Endothelial cell of umbilical vein (primary cell): ENCODE measurements at regions of chrX and their contacts with region 1.

Region 1: GRCh38 chrX:12115377-12115776 is 22.9 kb upstream of the FRMPD4 start:
- DNase-seq: peak; percentile 1
- H3K4me3 ChIP-seq: no peak overlapping the region
- H3K27ac ChIP-seq: no peak overlapping the region
- H3K4me1 ChIP-seq: no peaks in the 10 kb centered on the region
- H3K27me3 ChIP-seq: no peaks in the 10 kb centered on the region
- CTCF ChIP-seq: peak; percentile 10 to 18
- POLR2A ChIP-seq: no peak

Region 2: DNA sequence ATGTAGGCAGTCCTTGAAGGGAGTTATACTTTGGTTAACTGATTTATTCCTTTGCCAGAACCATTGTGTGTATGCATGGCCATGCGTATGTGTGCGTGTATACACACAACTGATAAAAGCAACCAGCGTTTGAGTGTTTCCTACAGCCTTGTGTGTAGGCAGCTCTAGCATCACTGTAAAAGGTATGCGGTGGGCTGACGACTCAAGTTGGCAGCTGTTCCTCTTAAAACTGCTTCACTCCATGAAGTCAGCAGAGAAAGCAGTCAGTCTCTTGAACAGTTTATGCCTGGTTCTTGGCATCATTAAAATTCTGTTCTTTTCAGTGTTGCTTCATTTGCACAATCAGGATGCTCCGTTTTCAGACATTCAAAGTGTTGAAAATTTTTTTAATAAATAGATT is 80.6 kb before region 1 on chrX:
- CTCF ChIA-PET with region 1: no interaction called
- POLR2A ChIA-PET with region 1: no interaction called
- dilution Hi-C with region 1: no loop called
- intact Hi-C with region 1: loop called (anchors 2 kb)
- DNase-seq: no peak
- H3K4me3 ChIP-seq: no peak overlapping the region
- H3K27ac ChIP-seq: no peak overlapping the region
- H3K4me1 ChIP-seq: no peaks in the 10 kb centered on the region
- H3K27me3 ChIP-seq: peaks cover 10 to 12% of the 10 kb centered on the region in 2 experiments
- CTCF ChIP-seq: no peak
- POLR2A ChIP-seq: no peak